ENCODE measurements at regions of chr19 and their contacts with region 1.

Region 1: GRCh38 chr19:19138169-19138981 is at the start of gene TMEM161A:
- DNase-seq: peak; percentile 97 to 98
- H3K4me3 ChIP-seq: peak within 1 kb of the TSS; percentile 87
- H3K27ac ChIP-seq: no peak within 1 kb of the TSS
- H3K4me1 ChIP-seq: peaks cover 9% of the 10 kb centered on the region
- H3K27me3 ChIP-seq: no peaks in the 10 kb centered on the region
- CTCF ChIP-seq: no peak
- total RNA-seq, gene TMEM161A: 41.1 and 53.6 TPM in 2 replicates

Region 2: DNA sequence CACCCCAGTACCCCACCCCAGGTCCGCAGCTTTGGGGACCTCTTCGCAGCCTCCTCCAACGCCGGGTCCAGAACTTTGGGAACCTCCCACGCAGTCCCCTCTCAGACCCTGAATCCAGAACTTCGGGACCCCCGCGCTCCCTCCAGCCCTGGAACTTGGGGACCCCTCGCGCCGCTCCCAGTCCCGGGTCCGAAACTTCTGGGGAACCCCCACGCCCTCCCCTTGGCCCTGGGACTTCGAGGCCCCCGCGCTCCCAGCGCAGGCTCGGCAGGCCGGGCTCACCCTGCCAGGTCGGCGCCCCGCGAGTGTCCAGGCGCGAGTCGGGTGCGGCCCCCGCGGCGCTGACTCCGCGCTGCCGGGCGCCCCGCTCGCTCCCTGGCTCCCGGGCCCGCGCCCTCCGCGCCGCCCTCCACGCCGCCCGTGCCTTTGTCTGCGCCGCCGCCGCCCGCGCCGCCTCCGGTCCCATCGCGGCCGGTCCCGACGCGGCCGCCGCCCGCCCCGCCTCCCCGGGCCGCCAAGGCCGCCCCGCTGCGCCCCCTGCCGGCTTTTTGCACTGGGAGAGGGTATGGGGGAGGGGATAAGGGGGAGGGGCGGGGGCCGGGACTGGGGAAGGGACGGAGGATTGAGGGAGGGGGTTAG is 197.5 kb before region 1 on chr19 and contains the start of gene HOMER3:
- CTCF ChIA-PET with region 1: interaction called, 11 read pairs
- POLR2A ChIA-PET with region 1: no interaction called
- intact Hi-C with region 1: no loop called
- DNase-seq: peak in 1 of 2 experiments; percentile 75
- H3K4me3 ChIP-seq: peak within 1 kb of the TSS; percentile 81
- H3K27ac ChIP-seq: no peak within 1 kb of the TSS
- H3K4me1 ChIP-seq: peaks cover 10% of the 10 kb centered on the region
- H3K27me3 ChIP-seq: no peaks in the 10 kb centered on the region
- CTCF ChIP-seq: no peak
- total RNA-seq, gene HOMER3: 55.7 and 62.5 TPM in 2 replicates

Region 3: GRCh38 chr19:19053508-19054314 is 84.7 kb before region 1 on chr19:
- CTCF ChIA-PET with region 1: no interaction called
- POLR2A ChIA-PET with region 1: no interaction called
- intact Hi-C with region 1: loop called (anchors 1 kb)
- DNase-seq: peak in 1 of 2 experiments; percentile 50
- H3K4me3 ChIP-seq: no peak overlapping the region
- H3K27ac ChIP-seq: no peak overlapping the region
- H3K4me1 ChIP-seq: no peaks in the 10 kb centered on the region
- H3K27me3 ChIP-seq: no peaks in the 10 kb centered on the region
- CTCF ChIP-seq: peak; percentile 90

Region 4: DNA sequence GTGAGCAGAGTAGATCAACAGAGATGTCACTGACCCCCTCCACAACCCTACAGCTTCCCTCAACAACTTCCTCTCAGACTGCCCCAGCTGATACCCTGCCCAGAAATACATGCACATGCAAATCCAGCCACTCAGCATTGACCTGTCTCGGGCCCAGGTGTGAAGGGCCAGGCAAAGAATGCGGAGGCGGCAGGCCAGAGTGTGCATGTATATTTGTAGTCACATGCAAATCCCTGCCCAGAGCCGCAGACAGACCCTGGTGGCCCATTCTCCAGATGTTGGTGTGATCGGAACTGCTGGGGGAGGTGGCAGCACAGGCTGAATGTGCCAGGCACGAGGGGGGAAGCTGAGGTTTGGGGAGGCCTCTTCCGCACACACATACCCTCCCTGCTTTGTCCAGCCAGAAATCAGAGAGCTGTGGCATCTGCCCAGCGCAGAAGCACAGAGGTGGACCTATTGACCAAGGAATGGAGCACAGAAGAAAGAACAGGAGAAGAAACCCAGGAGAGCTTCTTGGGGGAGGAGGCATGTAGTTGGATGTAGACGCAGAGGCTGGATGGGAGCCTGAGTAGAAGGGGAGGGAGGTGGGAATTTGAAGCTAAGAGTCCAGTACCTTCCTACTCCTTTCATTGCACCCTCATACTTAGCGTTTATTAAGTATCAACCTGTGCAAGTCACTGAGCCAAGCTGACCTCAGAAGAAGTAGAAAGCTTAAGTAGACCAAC is 17.3 kb after region 1 on chr19:
- CTCF ChIA-PET with region 1: interaction called, 3 read pairs
- POLR2A ChIA-PET with region 1: interaction called, 15 read pairs
- intact Hi-C with region 1: no loop called
- DNase-seq: no peak
- H3K4me3 ChIP-seq: no peak overlapping the region
- H3K27ac ChIP-seq: no peak overlapping the region
- H3K4me1 ChIP-seq: no peaks in the 10 kb centered on the region
- H3K27me3 ChIP-seq: no peaks in the 10 kb centered on the region
- CTCF ChIP-seq: no peak

Region 5: GRCh38 chr19:19643158-19644053 is 505.0 kb after region 1 on chr19 and contains the start of gene GMIP:
- CTCF ChIA-PET with region 1: no interaction called
- POLR2A ChIA-PET with region 1: no interaction called
- intact Hi-C with region 1: loop called (anchors 5 kb)
- DNase-seq: peak; percentile 63 to 80
- H3K4me3 ChIP-seq: peak within 1 kb of the TSS; percentile 96
- H3K27ac ChIP-seq: peak within 1 kb of the TSS; percentile 52
- H3K4me1 ChIP-seq: no peaks in the 10 kb centered on the region
- H3K27me3 ChIP-seq: no peaks in the 10 kb centered on the region
- CTCF ChIP-seq: peak; percentile 100
- total RNA-seq, gene GMIP: 15.4 and 18.2 TPM in 2 replicates